Heart left ventricle (tissue), 16 donors: ENCODE measurements at regions of chr21 and their contacts with region 1.

Region 1: GRCh38 chr21:24895885-24896734 is 711.2 kb downstream of the MRPL39 start:
- DNase-seq: no peak
- ATAC-seq: no peak
- H3K4me3 ChIP-seq: no peak overlapping the region
- H3K27ac ChIP-seq: no peak overlapping the region
- H3K4me1 ChIP-seq: no peaks in the 10 kb centered on the region
- H3K27me3 ChIP-seq: no peaks in the 10 kb centered on the region
- CTCF ChIP-seq: peak in 10 of 12 donors; percentile 19 to 52 (median 32)
- POLR2A ChIP-seq: no peak

Region 2: GRCh38 chr21:25313829-25314228 is 417.7 kb after region 1 on chr21:
- intact Hi-C with region 1: loop called in 8 of 10 experiments (anchors 5 to 10 kb)
- DNase-seq: no peak
- ATAC-seq: no peak
- H3K4me3 ChIP-seq: no peak overlapping the region
- H3K27ac ChIP-seq: no peak overlapping the region
- H3K4me1 ChIP-seq: no peaks in the 10 kb centered on the region
- H3K27me3 ChIP-seq: no peaks in the 10 kb centered on the region
- CTCF ChIP-seq: peak in 8 of 12 donors; percentile 10 to 42 (median 26)
- POLR2A ChIP-seq: no peak

Region 3: GRCh38 chr21:25385911-25386474 is 489.9 kb after region 1 on chr21:
- intact Hi-C with region 1: loop called in 6 of 10 experiments (anchors 5 to 10 kb)
- DNase-seq: no peak
- ATAC-seq: peak in 1 of 4 donors; percentile 24
- H3K4me3 ChIP-seq: no peak overlapping the region
- H3K27ac ChIP-seq: no peak overlapping the region
- H3K4me1 ChIP-seq: no peaks in the 10 kb centered on the region
- H3K27me3 ChIP-seq: peaks cover 0 to 6% (median 0%) of the 10 kb centered on the region in 9 donors
- CTCF ChIP-seq: peak; percentile 68 to 95 (median 81)
- POLR2A ChIP-seq: no peak